ENCODE measurements at regions of chr7 and their contacts with region 1.

Region 1: DNA sequence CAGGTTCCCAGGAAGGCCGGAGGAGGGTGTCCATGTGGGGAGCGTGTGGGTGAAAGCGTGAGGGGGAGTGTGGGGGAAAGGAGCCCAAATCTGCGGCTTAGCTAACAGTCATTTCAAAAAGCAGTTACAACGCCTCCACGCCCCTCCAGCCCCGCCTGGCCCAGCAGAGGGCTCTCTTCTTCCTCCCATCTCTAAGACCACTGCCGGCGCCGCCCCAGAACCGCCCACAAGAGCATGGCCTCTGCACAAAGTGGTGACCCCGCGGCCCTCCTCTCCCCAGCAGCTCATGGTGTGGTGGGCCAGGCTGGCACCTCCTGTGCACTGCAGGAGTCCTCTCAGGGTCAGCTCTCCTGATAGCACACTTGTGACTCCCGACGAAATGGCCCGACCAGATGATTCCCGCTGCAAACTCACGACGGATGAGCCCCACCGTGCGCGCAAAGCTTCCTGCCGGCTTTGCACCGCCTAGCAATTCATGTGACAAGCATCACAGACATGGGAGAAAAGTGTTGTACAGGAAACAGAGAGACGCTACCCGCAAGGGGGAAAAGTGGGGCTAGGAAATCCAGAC is 12.4 kb upstream of the HUS1 start:
- DNase-seq: peak; percentile 53 to 88
- H3K4me3 ChIP-seq: peak overlapping the region; percentile 50 to 67
- H3K27ac ChIP-seq: peak overlapping the region in 1 of 2 donors; percentile 38
- H3K4me1 ChIP-seq: no peaks in the 10 kb centered on the region
- H3K27me3 ChIP-seq: no peaks in the 10 kb centered on the region
- CTCF ChIP-seq: peak; percentile 49 to 74 (median 56)

Region 2: GRCh38 chr7:48471196-48471595 is 479.4 kb after region 1 on chr7:
- intact Hi-C with region 1: loop called (anchors 10 kb)
- DNase-seq: no peak
- H3K4me3 ChIP-seq: no peak overlapping the region
- H3K27ac ChIP-seq: no peak overlapping the region
- H3K4me1 ChIP-seq: no peaks in the 10 kb centered on the region
- H3K27me3 ChIP-seq: no peaks in the 10 kb centered on the region
- CTCF ChIP-seq: no peak